ENCODE measurements at regions of chr12 and their contacts with region 1.

Region 1: GRCh38 chr12:47527816-47528215 is 178.0 kb downstream of the RPAP3 start:
- DNase-seq: no peak
- ATAC-seq: no peak
- H3K4me3 ChIP-seq: no peak overlapping the region
- H3K27ac ChIP-seq: no peak overlapping the region
- H3K4me1 ChIP-seq: no peaks in the 10 kb centered on the region
- H3K27me3 ChIP-seq: no peaks in the 10 kb centered on the region
- CTCF ChIP-seq: no peak
- POLR2A ChIP-seq: no peak
- RAD21 ChIP-seq: no peak

Region 2: DNA sequence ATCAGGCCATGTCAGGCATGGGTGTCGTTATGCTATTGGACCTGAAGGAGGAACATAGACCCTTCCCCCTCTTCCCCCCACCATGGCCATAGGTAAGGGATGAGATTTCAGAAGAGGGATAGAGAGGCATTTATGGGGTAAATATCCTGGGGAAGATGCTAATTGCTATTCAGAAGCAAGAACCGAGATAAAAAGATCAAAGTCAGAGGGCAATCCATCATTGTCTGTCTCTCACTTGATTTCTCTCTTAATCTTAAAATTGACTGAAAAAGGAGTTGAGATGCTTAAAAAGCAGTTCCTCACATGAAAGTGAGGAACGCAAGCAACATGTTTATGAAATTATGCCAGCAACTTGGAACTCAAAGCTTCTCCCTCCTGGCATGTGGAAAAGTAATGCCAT is 34.0 kb before region 1 on chr12:
- CTCF ChIA-PET with region 1: no interaction called
- POLR2A ChIA-PET with region 1: no interaction called
- RAD21 ChIA-PET with region 1: no interaction called
- intact Hi-C with region 1: loop called (anchors 2 kb)
- DNase-seq: no peak
- ATAC-seq: no peak
- H3K4me3 ChIP-seq: no peak overlapping the region
- H3K27ac ChIP-seq: no peak overlapping the region
- H3K4me1 ChIP-seq: no peaks in the 10 kb centered on the region
- H3K27me3 ChIP-seq: peaks cover 18% of the 10 kb centered on the region; the same call in 1 of the 2 replicates
- CTCF ChIP-seq: no peak
- POLR2A ChIP-seq: no peak
- RAD21 ChIP-seq: no peak

Region 3: DNA sequence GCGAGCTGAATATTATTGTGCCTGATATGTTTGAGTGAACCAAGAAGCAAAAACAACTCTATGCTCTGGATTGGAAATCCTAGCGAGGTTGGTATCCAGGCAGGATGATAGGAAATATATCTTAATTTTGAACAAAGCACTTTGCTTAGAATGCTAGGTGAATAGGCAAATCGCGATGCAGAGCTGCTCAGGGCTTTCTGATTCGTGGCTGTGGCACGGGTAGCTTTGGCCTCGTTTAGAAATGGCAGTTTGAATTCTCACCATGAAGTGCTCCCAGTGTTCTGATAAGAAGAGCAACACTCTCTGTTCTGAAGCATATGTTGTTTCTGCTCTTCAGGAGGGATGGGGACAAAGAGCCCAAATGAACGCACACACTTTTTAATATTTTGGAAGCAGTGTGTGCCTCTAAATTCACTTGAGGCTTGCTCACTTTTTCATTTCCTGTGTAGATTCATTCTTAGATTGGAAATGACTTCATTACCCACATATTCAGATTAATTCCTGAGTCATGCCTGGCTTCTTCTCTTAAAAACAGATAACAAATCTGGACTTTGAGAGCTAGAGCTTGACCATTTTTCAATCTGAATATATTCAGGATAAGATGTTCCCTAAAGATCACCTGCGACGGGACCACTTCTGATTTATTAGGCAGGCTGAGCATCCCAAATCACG is 22.9 kb before region 1 on chr12:
- CTCF ChIA-PET with region 1: no interaction called
- POLR2A ChIA-PET with region 1: no interaction called
- RAD21 ChIA-PET with region 1: no interaction called
- intact Hi-C with region 1: no loop called
- DNase-seq: no peak
- ATAC-seq: no peak
- H3K4me3 ChIP-seq: no peak overlapping the region
- H3K27ac ChIP-seq: no peak overlapping the region
- H3K4me1 ChIP-seq: no peaks in the 10 kb centered on the region
- H3K27me3 ChIP-seq: no peaks in the 10 kb centered on the region
- CTCF ChIP-seq: no peak
- POLR2A ChIP-seq: no peak
- RAD21 ChIP-seq: no peak

Region 4: DNA sequence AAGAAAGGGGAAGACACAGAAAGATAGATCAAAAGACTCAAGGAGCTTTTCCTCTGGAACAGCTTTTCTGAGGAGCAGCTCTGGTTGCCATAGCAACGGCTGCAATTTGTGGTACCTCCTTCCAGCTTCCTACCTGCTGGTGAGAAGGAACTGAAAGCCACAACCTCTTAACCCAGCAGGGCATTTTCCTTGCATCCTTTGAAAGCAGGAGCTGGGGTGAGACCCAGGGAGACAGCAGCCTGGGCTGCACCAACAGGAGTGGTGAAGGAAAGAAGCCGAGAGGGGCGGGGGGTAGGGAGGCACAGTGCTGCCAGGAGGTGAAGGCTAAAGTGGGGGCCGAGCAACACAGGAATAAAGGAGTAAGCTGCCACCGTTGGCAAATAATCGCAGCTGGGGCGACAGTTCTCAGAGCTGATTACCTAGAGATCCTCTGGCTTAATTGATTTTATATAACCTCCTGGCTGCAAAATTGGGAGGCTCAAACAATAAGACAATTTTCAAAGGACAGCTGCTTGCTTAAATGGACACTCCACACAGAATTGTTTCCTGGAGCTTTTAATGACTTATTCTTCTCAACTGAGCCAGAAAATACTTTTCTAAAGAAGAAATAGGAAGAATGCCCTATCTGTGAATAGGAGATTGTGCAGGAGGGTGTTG is 48.6 kb after region 1 on chr12:
- CTCF ChIA-PET with region 1: no interaction called
- POLR2A ChIA-PET with region 1: no interaction called
- RAD21 ChIA-PET with region 1: no interaction called
- intact Hi-C with region 1: no loop called
- DNase-seq: no peak
- ATAC-seq: no peak
- H3K4me3 ChIP-seq: no peak overlapping the region
- H3K27ac ChIP-seq: no peak overlapping the region
- H3K4me1 ChIP-seq: no peaks in the 10 kb centered on the region
- H3K27me3 ChIP-seq: no peaks in the 10 kb centered on the region
- CTCF ChIP-seq: no peak
- POLR2A ChIP-seq: no peak
- RAD21 ChIP-seq: no peak